ENCODE measurements at regions of chr11 and their contacts with region 1.

Region 1: DNA sequence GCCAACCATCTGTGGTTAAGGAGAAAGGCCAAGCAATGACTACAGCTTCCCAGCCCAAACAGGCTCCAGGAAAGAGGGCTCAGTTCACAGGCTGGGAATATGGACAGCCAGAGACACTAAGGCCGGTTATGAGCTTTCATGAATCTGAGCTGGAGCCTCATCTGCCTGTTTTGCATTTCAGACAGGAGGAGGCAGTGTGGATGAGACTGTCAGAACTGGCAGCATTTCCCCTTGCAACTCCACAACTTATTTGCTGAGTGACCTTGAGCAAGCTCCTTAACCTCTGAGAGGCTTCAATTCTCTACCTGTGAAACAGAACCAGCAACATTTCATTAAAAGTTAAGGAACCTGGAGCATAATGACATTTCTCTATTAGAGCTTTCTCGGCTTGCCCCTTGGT is 264.0 kb downstream of the ETS1 start:
- DNase-seq: peak; percentile 67
- ATAC-seq: peak; percentile 8
- H3K4me3 Mint-ChIP-seq: peak overlapping the region; percentile 62
- H3K27ac Mint-ChIP-seq: peak overlapping the region; percentile 98
- H3K4me1 Mint-ChIP-seq: peaks cover 91% of the 10 kb centered on the region
- H3K27me3 Mint-ChIP-seq: no peaks in the 10 kb centered on the region

Region 2: DNA sequence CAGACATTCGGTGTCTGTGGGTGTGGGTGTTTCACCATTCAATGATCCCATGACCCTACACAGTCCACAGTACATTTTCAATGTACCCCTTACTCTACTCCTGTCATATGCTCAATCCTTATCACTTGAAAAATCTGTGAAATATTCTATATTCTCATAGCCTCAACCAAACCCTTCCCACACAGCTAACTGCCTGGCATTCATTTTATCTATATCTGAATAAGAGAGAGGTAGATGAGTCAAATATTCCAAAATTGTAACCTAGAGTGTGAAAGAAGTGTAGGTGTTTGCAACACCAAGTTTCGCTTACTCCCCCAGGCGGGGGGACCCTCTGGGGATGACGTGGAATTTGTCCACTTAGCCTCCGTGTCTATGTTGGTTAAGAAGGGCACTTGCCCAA is 90.8 kb before region 1 on chr11:
- CTCF ChIA-PET with region 1: interaction called, 4 read pairs
- POLR2A ChIA-PET with region 1: no interaction called
- intact Hi-C with region 1: loop called in 1 of 2 experiments (anchors 2 kb)
- DNase-seq: peak; percentile 81
- ATAC-seq: peak; percentile 63
- H3K4me3 Mint-ChIP-seq: no peak overlapping the region
- H3K27ac Mint-ChIP-seq: peak overlapping the region; percentile 92
- H3K4me1 Mint-ChIP-seq: peaks cover 60% of the 10 kb centered on the region
- H3K27me3 Mint-ChIP-seq: no peaks in the 10 kb centered on the region

Region 3: DNA sequence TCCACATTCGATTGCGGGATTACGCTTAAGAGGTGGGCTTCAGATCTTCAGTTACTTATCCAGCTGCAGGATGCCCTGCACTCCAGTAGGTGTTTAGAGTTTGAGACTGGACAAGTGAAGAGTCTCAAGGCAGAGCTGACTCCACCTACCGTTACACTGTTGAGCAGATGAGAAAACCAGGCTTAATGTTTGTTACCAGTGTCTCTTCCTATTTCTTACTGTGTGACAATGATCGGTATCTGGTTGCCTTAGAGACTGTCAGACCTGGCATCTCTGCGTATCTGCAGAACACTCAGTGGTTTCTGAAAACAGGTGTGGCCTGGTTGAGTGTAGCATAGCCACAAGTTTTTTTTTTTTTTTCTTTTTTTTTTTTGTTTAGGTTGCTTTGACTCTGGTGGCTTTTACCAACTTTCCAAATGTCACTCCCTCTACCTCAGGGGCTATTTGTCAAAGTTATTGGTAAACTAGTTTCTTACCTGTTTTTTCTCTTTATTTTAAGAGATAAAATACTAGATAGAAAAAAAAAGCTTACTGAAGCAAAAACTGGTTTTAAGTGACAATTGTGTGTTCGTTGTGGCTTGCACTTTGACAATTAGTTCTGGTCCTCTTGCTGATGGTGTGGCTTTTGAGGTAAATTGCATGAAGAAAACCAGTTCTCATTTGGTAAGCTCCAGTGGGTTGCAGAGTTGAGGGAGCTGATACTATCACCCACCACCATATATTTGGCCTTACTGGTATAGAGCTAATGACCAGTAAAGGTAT is 20.8 kb before region 1 on chr11:
- CTCF ChIA-PET with region 1: interaction called, 30 read pairs
- POLR2A ChIA-PET with region 1: interaction called, 8 read pairs
- intact Hi-C with region 1: loop called (anchors 1 kb)
- DNase-seq: peak; percentile 76
- ATAC-seq: peak; percentile 88
- H3K4me3 Mint-ChIP-seq: peak overlapping the region; percentile 80
- H3K27ac Mint-ChIP-seq: peak overlapping the region; percentile 95
- H3K4me1 Mint-ChIP-seq: peaks cover 84% of the 10 kb centered on the region
- H3K27me3 Mint-ChIP-seq: no peaks in the 10 kb centered on the region

Region 4: GRCh38 chr11:128365044-128365443 is 41.7 kb after region 1 on chr11:
- CTCF ChIA-PET with region 1: no interaction called
- POLR2A ChIA-PET with region 1: no interaction called
- intact Hi-C with region 1: no loop called
- DNase-seq: no peak
- ATAC-seq: peak; percentile 39
- H3K4me3 Mint-ChIP-seq: no peak overlapping the region
- H3K27ac Mint-ChIP-seq: no peak overlapping the region
- H3K4me1 Mint-ChIP-seq: peaks cover 18% of the 10 kb centered on the region
- H3K27me3 Mint-ChIP-seq: no peaks in the 10 kb centered on the region

Region 5: DNA sequence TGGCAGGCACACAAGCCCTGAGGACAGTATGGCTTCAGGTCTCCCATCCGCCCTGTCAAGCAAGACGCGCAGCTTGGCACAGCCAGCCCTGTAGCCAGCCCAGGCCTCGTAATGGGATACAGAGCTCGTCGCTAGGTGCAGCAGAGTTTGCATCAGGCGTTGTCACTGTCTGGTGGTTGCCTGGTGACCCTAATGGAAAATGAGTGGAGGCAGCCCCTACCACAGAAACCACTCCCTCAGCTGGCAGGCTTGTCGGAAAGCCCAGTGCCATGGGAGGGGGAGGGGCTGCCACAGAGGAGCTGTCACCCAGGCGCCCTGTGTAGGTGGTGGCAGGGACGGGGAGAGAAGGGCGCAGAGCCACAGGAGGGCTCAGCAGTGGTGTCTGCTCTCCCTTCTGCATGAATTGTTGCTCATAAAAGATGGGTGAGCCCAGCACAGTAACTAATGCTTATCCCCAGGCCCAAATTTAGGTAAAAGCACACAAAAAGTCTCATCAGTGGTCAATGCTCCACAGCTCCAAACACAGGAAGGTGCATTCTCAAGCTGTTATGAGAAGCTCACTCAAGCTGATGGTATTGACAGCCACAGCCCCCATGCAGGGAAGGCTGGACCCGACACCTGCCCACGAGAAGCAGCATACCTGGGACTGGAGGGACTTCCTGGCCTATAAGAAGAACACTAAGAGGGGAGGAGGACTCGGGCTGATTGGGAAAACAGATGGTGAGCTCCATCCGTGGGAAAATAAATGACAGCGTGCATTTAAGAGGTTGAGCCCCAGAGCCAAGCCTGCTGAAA is 99.4 kb after region 1 on chr11:
- CTCF ChIA-PET with region 1: interaction called, 3 read pairs
- POLR2A ChIA-PET with region 1: interaction called, 11 read pairs
- intact Hi-C with region 1: loop called (anchors 1 kb)
- DNase-seq: peak; percentile 97
- ATAC-seq: peak; percentile 94
- H3K4me3 Mint-ChIP-seq: peak overlapping the region; percentile 36
- H3K27ac Mint-ChIP-seq: peak overlapping the region; percentile 82
- H3K4me1 Mint-ChIP-seq: peaks cover 53% of the 10 kb centered on the region
- H3K27me3 Mint-ChIP-seq: no peaks in the 10 kb centered on the region

Region 6: DNA sequence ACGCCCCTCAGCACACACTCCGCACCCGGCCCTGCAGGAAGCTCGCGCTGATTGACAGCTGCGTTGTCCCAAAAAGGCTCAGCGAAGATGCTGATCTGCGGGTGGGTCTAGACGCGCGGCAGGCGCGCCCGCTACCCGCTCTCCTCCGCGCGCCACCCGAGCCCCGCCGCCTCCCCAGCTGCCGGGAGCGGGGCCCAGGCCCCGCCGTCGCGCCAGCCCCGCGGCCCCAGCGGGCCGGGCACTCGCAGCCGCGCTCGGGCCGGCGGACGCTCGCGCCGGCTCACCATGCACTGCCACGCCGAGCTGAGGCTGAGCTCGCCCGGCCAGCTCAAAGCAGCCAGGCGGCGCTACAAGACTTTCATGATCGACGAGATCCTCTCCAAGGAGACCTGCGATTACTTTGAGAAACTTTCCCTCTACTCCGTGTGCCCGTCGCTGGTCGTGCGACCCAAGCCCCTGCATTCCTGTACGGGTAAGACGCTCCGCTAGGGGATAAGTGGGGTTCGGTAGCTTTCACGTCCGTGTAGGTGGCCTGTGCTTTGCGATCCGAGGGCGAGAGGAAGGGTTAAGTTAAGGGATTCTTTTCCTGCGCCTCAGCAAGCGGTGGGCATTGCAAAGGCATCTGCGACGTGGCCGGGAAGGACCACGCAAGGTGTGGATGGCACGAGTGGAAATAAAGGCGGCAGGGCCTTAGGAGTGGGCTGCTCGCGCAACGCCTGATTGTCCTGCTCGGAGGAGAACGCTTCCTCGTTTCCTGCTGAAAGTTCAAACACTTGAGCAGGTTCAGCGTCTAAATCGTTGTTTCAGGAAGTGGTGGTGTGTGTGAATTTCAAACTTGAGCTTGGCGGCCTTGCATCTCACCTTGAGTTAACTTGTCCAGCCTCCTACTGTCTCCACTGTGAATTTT is 1052.6 kb after region 1 on chr11 and contains the start of gene BARX2:
- CTCF ChIA-PET with region 1: no interaction called
- POLR2A ChIA-PET with region 1: no interaction called
- intact Hi-C with region 1: no loop called
- DNase-seq: peak; percentile 72
- ATAC-seq: peak; percentile 74
- H3K4me3 Mint-ChIP-seq: peak within 1 kb of the TSS; percentile 50
- H3K27ac Mint-ChIP-seq: no peak within 1 kb of the TSS
- H3K4me1 Mint-ChIP-seq: peaks cover 25% of the 10 kb centered on the region
- H3K27me3 Mint-ChIP-seq: peaks cover 61% of the 10 kb centered on the region
- total RNA-seq, gene BARX2: 0.89 to 1.3 TPM

Measured in activated CD4-positive, alpha-beta T cell treated with anti-CD3 and anti-CD28 coated beads for 36 hours (primary cell).